Breast epithelium (tissue), 4 donors: ENCODE measurements at regions of chr6 and their contacts with region 1.

Region 1: DNA sequence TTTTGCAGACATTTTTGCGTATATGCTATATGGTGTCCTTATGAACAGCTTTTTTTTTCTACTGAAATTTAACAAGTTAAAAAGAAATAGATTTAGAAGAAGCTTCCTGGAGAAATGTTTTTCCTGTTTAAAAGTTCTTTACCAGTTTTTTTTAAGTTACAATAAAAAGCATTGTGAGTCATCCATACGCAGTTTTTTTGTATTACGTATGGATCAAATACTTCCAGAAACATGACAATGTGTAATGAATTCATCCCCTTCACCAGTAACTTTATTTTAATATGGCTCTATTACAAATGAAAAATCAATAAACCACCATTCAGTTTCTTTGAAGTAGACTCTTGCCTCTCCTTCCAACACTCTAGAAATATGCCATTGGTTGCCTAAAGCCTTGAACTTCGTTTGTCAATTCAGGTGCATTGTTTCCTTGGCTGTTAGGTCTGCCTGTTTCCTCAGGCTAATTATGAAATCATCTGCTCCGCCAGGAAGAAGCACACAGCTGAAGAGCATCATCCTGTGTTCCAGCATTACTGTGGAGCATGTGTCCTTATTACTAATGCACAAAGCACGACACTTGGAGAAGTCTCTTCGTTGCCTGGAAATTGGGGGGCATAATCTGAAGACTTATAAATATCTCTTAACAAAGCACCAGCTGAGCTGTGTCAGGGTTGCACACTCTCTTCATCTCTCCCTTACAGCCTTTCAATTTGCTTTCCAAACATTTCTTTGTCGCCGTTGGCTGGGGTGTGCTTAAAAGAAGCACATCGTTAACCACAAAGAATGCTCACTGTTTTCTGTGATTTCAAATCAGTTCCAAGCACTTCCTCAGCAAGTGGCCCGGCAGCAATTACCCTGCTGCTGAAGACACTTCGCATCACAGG is 9.6 kb downstream of the MOXD1 start:
- DNase-seq: peak in 1 of 2 donors; percentile 20
- H3K4me3 ChIP-seq: no peak overlapping the region
- H3K27ac ChIP-seq: peak overlapping the region in 1 of 2 donors; percentile 64
- H3K4me1 ChIP-seq: no peaks in the 10 kb centered on the region
- H3K27me3 ChIP-seq: no peaks in the 10 kb centered on the region
- CTCF ChIP-seq: no peak
- POLR2A ChIP-seq: no peak

Region 2: DNA sequence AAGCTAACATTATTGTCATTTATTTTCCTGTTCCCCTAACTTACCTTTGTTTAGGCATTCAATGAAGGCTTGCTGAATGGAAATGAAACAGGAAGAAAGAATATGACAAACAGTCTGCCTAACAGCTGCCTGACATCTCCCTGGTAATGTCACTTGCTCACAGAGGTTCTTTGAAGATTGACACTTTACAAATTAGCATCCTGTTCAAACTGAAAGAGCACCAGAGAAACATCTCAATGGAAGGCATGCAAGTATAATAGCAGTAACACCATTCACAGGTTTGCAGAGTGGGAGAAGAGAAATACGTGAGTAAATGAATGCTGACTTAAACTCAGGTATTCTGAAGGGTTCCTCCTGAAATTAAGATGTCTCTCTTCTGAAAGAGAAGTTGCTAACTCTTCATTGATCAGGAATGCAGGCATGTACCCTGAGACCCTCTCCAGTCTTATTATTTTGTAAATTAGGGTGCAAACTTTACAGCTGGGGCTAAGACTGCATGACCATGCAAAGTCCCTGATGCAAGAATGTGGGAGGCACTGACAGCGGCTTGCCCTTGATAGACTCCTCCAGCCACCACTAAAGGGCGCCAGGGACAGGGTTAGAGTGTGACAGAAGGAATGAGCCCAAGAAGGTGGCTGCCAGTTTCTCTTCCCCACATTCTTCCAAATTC is 1565.7 kb before region 1 on chr6:
- intact Hi-C with region 1: loop called (anchors 10 kb)
- DNase-seq: no peak
- H3K4me3 ChIP-seq: no peak overlapping the region
- H3K27ac ChIP-seq: no peak overlapping the region
- H3K4me1 ChIP-seq: no peaks in the 10 kb centered on the region
- H3K27me3 ChIP-seq: no peaks in the 10 kb centered on the region
- CTCF ChIP-seq: no peak
- POLR2A ChIP-seq: no peak